Prostate gland (tissue), 2 donors: ENCODE measurements at regions of chr2 and their contacts with region 1.

Region 1: DNA sequence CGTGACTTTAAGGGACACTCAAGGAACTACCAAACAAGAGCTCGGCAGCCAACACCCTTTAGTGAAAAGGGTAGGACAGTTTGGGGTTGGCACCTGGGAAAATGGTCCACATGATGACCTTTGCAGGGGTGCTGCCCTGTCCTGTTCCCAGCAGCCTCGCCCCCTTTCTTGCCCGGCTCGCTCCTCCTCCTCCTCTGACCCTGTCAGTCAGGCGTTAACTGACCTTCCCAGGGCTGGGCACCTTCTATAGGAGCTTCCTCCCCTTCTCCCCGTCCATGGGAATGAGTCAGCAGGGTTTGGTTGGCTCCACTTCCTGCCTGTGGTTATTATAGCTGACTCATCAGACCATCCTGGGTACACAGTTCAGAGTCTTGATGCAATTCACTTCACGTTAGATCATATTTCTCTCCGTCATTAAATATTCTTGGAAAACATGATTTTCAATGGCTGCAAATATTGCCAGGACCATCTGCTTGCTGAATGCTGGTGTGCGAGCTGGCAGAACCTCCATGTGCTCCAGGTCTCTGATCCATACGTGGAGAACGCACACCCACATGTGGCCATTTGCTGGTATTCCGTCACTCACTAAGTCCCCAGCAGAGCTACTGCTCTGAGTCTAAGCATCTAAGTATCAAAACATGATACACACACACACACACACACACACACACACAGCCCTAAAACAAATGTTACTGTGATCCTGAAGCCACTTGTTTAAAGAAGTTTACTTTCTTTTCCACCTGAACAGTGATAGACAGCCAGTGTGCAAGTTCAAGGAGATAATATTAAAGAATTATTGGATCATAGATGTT is 185.0 kb downstream of the ANAPC1 start:
- DNase-seq: peak; percentile 50
- H3K4me3 ChIP-seq: no peak overlapping the region
- H3K27ac ChIP-seq: no peak overlapping the region
- H3K4me1 ChIP-seq: no peaks in the 10 kb centered on the region
- H3K27me3 ChIP-seq: no peaks in the 10 kb centered on the region
- CTCF ChIP-seq: peak in 2 of 4 experiments; percentile 26 to 38
- POLR2A ChIP-seq: no peak

Region 2: GRCh38 chr2:111116843-111117597 is 581.9 kb before region 1 on chr2:
- intact Hi-C with region 1: loop called (anchors 5 kb)
- DNase-seq: peak; percentile 75
- H3K4me3 ChIP-seq: peak overlapping the region; percentile 13 to 23
- H3K27ac ChIP-seq: no peak overlapping the region
- H3K4me1 ChIP-seq: peaks cover 3% of the 10 kb centered on the region
- H3K27me3 ChIP-seq: no peaks in the 10 kb centered on the region
- CTCF ChIP-seq: peak; percentile 35 to 93 (median 84)
- POLR2A ChIP-seq: no peak